ENCODE measurements at regions of chr19 and their contacts with region 1.

Region 1: GRCh38 chr19:40806488-40807468 is 7.8 kb downstream of the EGLN2 start:
- DNase-seq: peak; percentile 93
- H3K4me3 ChIP-seq: peak overlapping the region in 6 of 8 donors; percentile 9 to 96 (median 16)
- H3K27ac ChIP-seq: peak overlapping the region; percentile 82 to 99 (median 94)
- H3K4me1 ChIP-seq: peaks cover 80 to 100% (median 97%) of the 10 kb centered on the region in 6 donors
- H3K27me3 ChIP-seq: no peaks in the 10 kb centered on the region
- CTCF ChIP-seq: peak; percentile 78 to 96 (median 93)
- POLR2A ChIP-seq: no peak

Region 2: GRCh38 chr19:40750059-40750873 is 56.5 kb before region 1 on chr19 and contains the start of gene ACTMAP:
- intact Hi-C with region 1: loop called (anchors 10 kb)
- DNase-seq: peak; percentile 99
- H3K4me3 ChIP-seq: peak within 1 kb of the TSS; percentile 60 to 93 (median 74)
- H3K27ac ChIP-seq: peak within 1 kb of the TSS; percentile 93 to 97 (median 96)
- H3K4me1 ChIP-seq: peaks cover 32 to 77% (median 57%) of the 10 kb centered on the region in 6 donors
- H3K27me3 ChIP-seq: no peaks in the 10 kb centered on the region
- CTCF ChIP-seq: peak in 2 of 11 experiments; percentile 6 to 40
- POLR2A ChIP-seq: peak in 2 of 3 donors; percentile 40 to 46
- total RNA-seq, gene ACTMAP: 6.0 to 16.2 (median 9.8) TPM

Region 3: DNA sequence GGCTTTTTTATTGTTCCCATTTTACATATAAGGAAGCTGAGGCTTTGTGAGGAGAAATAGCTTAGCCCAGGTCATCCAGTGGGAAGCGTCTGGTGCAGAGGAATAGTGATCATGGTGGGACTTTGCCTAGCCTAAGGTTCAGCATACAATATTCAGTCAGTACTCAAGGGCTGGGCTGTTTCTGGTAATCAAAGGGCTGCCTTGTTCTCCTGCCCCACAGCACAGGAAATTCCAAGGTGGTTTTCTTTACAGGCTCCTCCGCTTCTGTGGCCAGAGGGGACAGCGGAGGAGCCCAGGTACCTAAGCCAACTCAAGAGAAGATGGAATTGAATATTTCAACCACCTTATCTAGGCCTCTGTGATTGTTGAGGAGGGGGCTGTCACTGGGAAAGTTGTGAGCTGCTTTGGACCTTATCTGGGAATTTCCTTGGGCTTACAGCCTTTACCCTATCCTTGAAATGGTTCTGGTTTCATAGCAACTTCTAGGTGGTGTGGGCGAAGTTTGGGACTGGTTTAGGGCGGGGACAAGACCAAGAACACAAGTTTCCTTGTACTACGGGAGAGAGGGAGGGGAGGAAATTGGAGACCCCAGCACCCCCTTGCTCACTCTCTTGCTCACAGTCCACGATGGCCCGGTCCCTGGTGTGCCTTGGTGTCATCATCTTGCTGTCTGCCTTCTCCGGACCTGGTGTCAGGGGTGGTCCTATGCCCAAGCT is 31.7 kb before region 1 on chr19 and contains the start of gene MIA:
- intact Hi-C with region 1: no loop called
- DNase-seq: no peak
- H3K4me3 ChIP-seq: no peak within 1 kb of the TSS
- H3K27ac ChIP-seq: peak within 1 kb of the TSS in 3 of 8 donors; percentile 98 to 100 (median 99)
- H3K4me1 ChIP-seq: peaks cover 10 to 53% (median 29%) of the 10 kb centered on the region in 6 donors
- H3K27me3 ChIP-seq: no peaks in the 10 kb centered on the region
- CTCF ChIP-seq: no peak
- POLR2A ChIP-seq: no peak
- total RNA-seq, gene MIA: 1.5 TPM in 1 of 7 donors, not detected in the others

Region 4: DNA sequence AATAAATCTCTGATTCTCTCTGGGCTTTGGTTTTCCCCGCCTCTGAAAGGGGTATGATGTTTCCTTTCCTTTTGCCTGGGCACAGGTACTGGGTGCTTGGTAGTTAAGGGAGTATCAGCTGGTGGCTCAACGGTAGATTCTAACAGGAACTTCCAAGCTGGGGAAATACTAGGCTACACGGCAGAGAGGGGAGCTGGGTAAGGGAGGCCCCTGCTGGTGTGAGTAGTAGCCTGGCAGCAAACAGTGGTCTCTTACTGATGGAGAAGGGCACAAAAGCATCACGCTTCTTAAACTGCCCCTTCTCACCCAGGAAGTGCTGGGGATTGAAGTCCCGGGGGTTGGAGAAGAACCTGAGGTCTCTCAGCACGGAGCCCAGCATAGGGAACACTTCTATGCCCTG is 102.2 kb after region 1 on chr19:
- intact Hi-C with region 1: no loop called
- DNase-seq: no peak
- H3K4me3 ChIP-seq: peak overlapping the region in 2 of 8 donors; percentile 30 to 43
- H3K27ac ChIP-seq: peak overlapping the region in 2 of 8 donors; percentile 29 to 55
- H3K4me1 ChIP-seq: peaks cover 0 to 12% (median 3%) of the 10 kb centered on the region in 6 donors
- H3K27me3 ChIP-seq: peaks cover 0 to 62% (median 0%) of the 10 kb centered on the region in 7 donors
- CTCF ChIP-seq: peak in 5 of 11 experiments; percentile 10 to 62 (median 44)
- POLR2A ChIP-seq: no peak